ENCODE measurements at regions of chr19 and their contacts with region 1.

Region 1: GRCh38 chr19:12945479-12946091 is at the start of gene RAD23A:
- H3K4me3 ChIP-seq: peak within 1 kb of the TSS; percentile 84
- H3K27ac ChIP-seq: peak within 1 kb of the TSS; percentile 83
- H3K4me1 ChIP-seq: peaks cover 3% of the 10 kb centered on the region; the same call in 1 of the 2 replicates
- CTCF ChIP-seq: no peak

Region 2: GRCh38 chr19:12956446-12957388 is 11.1 kb after region 1 on chr19 and contains the start of gene GADD45GIP1:
- CTCF ChIA-PET with region 1: interaction called, 4 read pairs
- POLR2A ChIA-PET with region 1: interaction called, 12 read pairs
- H3K4me3 ChIP-seq: peak within 1 kb of the TSS; percentile 74
- H3K27ac ChIP-seq: peak within 1 kb of the TSS; percentile 63
- H3K4me1 ChIP-seq: peaks cover 10% of the 10 kb centered on the region
- CTCF ChIP-seq: no peak

Region 3: GRCh38 chr19:13012690-13013608 is 67.4 kb after region 1 on chr19:
- CTCF ChIA-PET with region 1: no interaction called
- POLR2A ChIA-PET with region 1: no interaction called
- H3K4me3 ChIP-seq: no peak overlapping the region
- H3K27ac ChIP-seq: no peak overlapping the region
- H3K4me1 ChIP-seq: peaks cover 9% of the 10 kb centered on the region
- CTCF ChIP-seq: no peak